Mammary epithelial cell (primary cell): ENCODE measurements at regions of chr20 and their contacts with region 1.

Region 1: GRCh38 chr20:1941226-1941625 is 46.0 kb downstream of the SIRPA start:
- DNase-seq: peak; percentile 94
- H3K4me3 ChIP-seq: no peak overlapping the region
- H3K27ac ChIP-seq: peak overlapping the region; percentile 43
- H3K4me1 ChIP-seq: peaks cover 45% of the 10 kb centered on the region
- H3K27me3 ChIP-seq: no peaks in the 10 kb centered on the region
- CTCF ChIP-seq: no peak

Region 2: GRCh38 chr20:1912053-1912452 is 29.2 kb before region 1 on chr20:
- CTCF ChIA-PET with region 1: no interaction called
- dilution Hi-C with region 1: no loop called
- in situ Hi-C with region 1: no loop called
- intact Hi-C with region 1: loop called (anchors 2 kb)
- DNase-seq: peak; percentile 70
- H3K4me3 ChIP-seq: no peak overlapping the region
- H3K27ac ChIP-seq: peak overlapping the region; percentile 28
- H3K4me1 ChIP-seq: peaks cover 26% of the 10 kb centered on the region
- H3K27me3 ChIP-seq: no peaks in the 10 kb centered on the region
- CTCF ChIP-seq: peak in 1 of 2 donors; percentile 38